Caco-2 (cell line): ENCODE measurements at regions of chr10 and their contacts with region 1.

Region 1: GRCh38 chr10:29857843-29858701 is 201.3 kb downstream of the JCAD start:
- DNase-seq: peak; percentile 81 to 85
- H3K4me3 ChIP-seq: no peak overlapping the region
- H3K4me3 Mint-ChIP-seq: peak overlapping the region; percentile 18
- H3K27ac Mint-ChIP-seq: peak overlapping the region; percentile 28
- H3K4me1 ChIP-seq: peaks cover 72% of the 10 kb centered on the region
- H3K4me1 Mint-ChIP-seq: peaks cover 44% of the 10 kb centered on the region
- H3K27me3 ChIP-seq: no peaks in the 10 kb centered on the region
- H3K27me3 Mint-ChIP-seq: no peaks in the 10 kb centered on the region
- CTCF ChIP-seq: peak; percentile 83 to 95

Region 2: GRCh38 chr10:28778524-28778923 is 1079.5 kb before region 1 on chr10:
- CTCF ChIA-PET with region 1: no interaction called
- POLR2A ChIA-PET with region 1: no interaction called
- intact Hi-C with region 1: no loop called
- DNase-seq: no peak
- H3K4me3 ChIP-seq: no peak overlapping the region
- H3K4me3 Mint-ChIP-seq: no peak overlapping the region
- H3K27ac Mint-ChIP-seq: no peak overlapping the region
- H3K4me1 ChIP-seq: peaks cover 35% of the 10 kb centered on the region
- H3K4me1 Mint-ChIP-seq: peaks cover 32% of the 10 kb centered on the region
- H3K27me3 ChIP-seq: no peaks in the 10 kb centered on the region
- H3K27me3 Mint-ChIP-seq: no peaks in the 10 kb centered on the region
- CTCF ChIP-seq: no peak

Region 3: DNA sequence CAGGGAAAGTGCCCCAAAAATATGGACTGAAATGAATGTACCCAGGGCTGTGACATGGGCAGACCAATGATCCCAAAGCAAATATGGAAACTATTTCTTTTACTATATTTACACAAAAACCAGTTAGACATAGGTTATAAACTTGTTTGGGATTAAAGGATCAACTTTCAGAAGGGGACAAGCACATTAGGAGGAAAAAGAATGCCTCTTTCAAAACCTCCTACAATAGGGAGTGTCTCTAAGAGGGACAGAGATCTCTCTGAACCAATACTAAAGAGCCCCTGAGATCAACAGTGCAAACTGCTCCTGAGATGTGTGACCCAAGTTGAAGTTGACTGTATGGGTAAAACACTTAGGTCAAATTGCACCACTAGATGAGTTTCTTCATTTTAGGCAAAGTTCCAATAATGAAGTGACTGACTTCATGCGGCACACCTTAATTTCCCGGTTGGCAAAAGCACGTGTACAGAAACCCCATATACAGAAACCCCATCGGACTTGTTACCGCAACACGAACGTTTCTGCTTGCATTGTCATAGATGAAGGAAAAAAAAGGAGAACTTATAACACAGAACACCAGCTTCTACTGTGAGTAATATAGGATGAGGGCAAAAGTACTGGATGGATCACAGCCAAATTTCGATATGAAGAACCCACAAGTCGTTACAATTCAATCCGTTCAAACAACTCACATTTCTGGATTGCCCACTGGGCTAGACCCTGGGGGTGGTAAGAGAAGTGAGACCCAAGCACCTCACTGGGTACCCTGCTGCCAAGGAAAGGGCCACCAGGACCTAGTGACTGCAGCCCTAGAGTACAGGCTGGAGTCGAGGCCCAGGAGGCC is 227.6 kb before region 1 on chr10:
- CTCF ChIA-PET with region 1: no interaction called
- POLR2A ChIA-PET with region 1: no interaction called
- intact Hi-C with region 1: loop called (anchors 2 kb)
- DNase-seq: peak in 1 of 2 experiments; percentile 79
- H3K4me3 ChIP-seq: no peak overlapping the region
- H3K4me3 Mint-ChIP-seq: peak overlapping the region; percentile 64
- H3K27ac Mint-ChIP-seq: peak overlapping the region; percentile 69
- H3K4me1 ChIP-seq: peaks cover 60% of the 10 kb centered on the region
- H3K4me1 Mint-ChIP-seq: peaks cover 60% of the 10 kb centered on the region
- H3K27me3 ChIP-seq: no peaks in the 10 kb centered on the region
- H3K27me3 Mint-ChIP-seq: no peaks in the 10 kb centered on the region
- CTCF ChIP-seq: no peak

Region 4: DNA sequence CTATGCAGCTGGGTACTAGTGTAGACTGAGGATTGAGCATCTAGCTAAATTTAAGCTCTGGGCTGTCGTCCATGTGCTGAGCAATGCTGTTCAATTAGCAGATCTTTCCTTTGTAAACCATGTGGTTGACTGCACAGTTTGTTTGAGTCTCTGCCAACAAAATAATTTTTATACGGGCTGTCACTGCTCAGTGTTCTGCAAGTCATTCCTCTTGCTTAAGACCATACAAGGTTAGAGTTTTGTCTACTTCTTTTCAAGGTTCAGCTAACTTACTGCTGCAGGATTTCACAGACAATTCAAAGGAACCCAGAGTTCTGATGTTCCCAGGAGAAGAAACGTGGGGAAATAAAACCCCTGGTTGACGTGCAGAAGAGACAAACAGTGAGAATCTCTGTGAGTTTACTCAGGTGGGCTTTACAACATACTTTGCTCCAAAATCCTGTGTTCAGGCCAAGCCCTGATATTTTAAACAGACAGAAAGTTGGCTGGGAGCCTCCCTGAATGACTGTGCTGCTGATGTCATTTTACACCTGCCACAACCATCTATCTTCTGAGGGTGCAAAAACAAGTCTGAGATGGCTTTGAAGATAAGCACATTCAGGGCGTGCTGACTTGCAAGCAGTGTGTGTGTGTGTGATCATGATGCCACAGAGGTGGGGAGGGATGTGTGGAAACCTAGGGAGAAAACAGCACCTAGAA is 46.2 kb before region 1 on chr10:
- CTCF ChIA-PET with region 1: no interaction called
- POLR2A ChIA-PET with region 1: no interaction called
- intact Hi-C with region 1: loop called (anchors 5 kb)
- DNase-seq: peak in 1 of 2 experiments; percentile 18
- H3K4me3 ChIP-seq: no peak overlapping the region
- H3K4me3 Mint-ChIP-seq: no peak overlapping the region
- H3K27ac Mint-ChIP-seq: no peak overlapping the region
- H3K4me1 ChIP-seq: peaks cover 9% of the 10 kb centered on the region; the same call in 1 of the 2 replicates
- H3K4me1 Mint-ChIP-seq: peaks cover 10% of the 10 kb centered on the region
- H3K27me3 ChIP-seq: no peaks in the 10 kb centered on the region
- H3K27me3 Mint-ChIP-seq: no peaks in the 10 kb centered on the region
- CTCF ChIP-seq: no peak

Region 5: GRCh38 chr10:29841724-29842649 is 16.1 kb before region 1 on chr10:
- CTCF ChIA-PET with region 1: interaction called, 9 read pairs
- POLR2A ChIA-PET with region 1: no interaction called
- intact Hi-C with region 1: loop called (anchors 1 kb)
- DNase-seq: peak; percentile 79 to 81
- H3K4me3 ChIP-seq: no peak overlapping the region
- H3K4me3 Mint-ChIP-seq: peak overlapping the region; percentile 31
- H3K27ac Mint-ChIP-seq: peak overlapping the region; percentile 93
- H3K4me1 ChIP-seq: peaks cover 47% of the 10 kb centered on the region
- H3K4me1 Mint-ChIP-seq: peaks cover 52% of the 10 kb centered on the region
- H3K27me3 ChIP-seq: no peaks in the 10 kb centered on the region
- H3K27me3 Mint-ChIP-seq: no peaks in the 10 kb centered on the region
- CTCF ChIP-seq: no peak

Region 6: DNA sequence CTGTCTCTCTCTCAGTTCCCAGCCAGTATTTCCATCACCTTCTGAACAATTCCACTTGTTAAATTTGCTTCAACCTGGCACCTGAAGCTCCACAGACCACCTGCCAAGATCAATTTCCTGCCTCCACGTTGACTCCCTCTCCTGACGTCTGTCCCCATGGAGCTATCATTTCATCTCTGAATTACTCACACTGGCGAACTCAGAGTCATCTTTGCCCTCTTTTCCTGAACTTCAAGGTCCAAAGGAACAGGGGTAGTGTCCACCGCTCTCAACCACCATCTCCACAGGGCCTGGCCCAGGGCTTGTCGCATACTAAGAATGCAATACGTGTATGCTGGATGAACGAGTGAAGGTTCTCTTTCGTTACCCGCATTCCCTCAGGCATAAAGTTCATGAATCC is 18.0 kb after region 1 on chr10:
- CTCF ChIA-PET with region 1: no interaction called
- POLR2A ChIA-PET with region 1: no interaction called
- intact Hi-C with region 1: no loop called
- DNase-seq: no peak
- H3K4me3 ChIP-seq: no peak overlapping the region
- H3K4me3 Mint-ChIP-seq: no peak overlapping the region
- H3K27ac Mint-ChIP-seq: no peak overlapping the region
- H3K4me1 ChIP-seq: peaks cover 1% of the 10 kb centered on the region; the same call in 1 of the 2 replicates
- H3K4me1 Mint-ChIP-seq: peaks cover 10% of the 10 kb centered on the region
- H3K27me3 ChIP-seq: no peaks in the 10 kb centered on the region
- H3K27me3 Mint-ChIP-seq: no peaks in the 10 kb centered on the region
- CTCF ChIP-seq: no peak